Right ventricle myocardium superior (tissue), 1 donor: ENCODE measurements at regions of chr10 and their contacts with region 1.

Region 1: GRCh38 chr10:511101-511848 is 178.2 kb downstream of the DIP2C start:
- DNase-seq: peak; percentile 93
- ATAC-seq: peak; percentile 94

Region 2: DNA sequence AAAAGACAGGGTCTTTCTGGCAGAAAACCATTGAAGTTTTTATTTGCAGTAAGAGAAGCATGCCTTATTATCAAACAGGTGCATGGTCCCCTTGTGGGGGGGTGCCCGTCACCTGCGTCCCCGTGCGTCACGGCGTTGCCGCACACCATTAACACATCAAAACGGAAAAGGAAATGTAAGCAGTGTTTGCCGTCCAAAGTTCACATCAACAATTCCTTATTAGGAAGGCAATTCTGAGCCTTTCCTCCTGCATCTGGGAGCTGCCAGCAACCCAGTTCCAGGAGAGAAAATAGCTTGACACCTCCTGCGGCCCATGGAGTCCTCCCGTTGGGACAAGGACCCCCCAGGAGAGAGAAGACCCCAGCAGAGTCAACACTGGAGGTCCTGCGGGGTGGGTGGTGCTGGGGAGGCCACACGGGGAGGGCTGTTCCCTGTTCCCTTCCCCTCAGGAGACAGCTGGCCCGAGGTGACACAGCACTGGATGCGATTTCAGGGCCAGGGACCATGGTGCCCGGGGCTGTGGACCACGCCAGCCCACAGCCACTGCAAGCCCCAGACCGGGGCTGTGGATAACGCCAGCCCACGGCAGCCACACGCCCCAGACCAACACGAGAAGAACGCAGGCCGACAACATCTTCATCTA is 138.6 kb after region 1 on chr10:
- intact Hi-C with region 1: no loop called
- DNase-seq: no peak
- ATAC-seq: peak; percentile 42

Region 3: GRCh38 chr10:697097-697875 is 186.0 kb after region 1 on chr10:
- intact Hi-C with region 1: no loop called
- DNase-seq: no peak
- ATAC-seq: no peak

Region 4: GRCh38 chr10:784403-785088 is 273.3 kb after region 1 on chr10:
- intact Hi-C with region 1: loop called (anchors 5 kb)
- DNase-seq: peak; percentile 66
- ATAC-seq: peak; percentile 67

Region 5: GRCh38 chr10:878333-878759 is 367.1 kb after region 1 on chr10:
- intact Hi-C with region 1: no loop called
- DNase-seq: no peak
- ATAC-seq: no peak